Panc1 (cell line): ENCODE measurements at regions of chr9 and their contacts with region 1.

Region 1: DNA sequence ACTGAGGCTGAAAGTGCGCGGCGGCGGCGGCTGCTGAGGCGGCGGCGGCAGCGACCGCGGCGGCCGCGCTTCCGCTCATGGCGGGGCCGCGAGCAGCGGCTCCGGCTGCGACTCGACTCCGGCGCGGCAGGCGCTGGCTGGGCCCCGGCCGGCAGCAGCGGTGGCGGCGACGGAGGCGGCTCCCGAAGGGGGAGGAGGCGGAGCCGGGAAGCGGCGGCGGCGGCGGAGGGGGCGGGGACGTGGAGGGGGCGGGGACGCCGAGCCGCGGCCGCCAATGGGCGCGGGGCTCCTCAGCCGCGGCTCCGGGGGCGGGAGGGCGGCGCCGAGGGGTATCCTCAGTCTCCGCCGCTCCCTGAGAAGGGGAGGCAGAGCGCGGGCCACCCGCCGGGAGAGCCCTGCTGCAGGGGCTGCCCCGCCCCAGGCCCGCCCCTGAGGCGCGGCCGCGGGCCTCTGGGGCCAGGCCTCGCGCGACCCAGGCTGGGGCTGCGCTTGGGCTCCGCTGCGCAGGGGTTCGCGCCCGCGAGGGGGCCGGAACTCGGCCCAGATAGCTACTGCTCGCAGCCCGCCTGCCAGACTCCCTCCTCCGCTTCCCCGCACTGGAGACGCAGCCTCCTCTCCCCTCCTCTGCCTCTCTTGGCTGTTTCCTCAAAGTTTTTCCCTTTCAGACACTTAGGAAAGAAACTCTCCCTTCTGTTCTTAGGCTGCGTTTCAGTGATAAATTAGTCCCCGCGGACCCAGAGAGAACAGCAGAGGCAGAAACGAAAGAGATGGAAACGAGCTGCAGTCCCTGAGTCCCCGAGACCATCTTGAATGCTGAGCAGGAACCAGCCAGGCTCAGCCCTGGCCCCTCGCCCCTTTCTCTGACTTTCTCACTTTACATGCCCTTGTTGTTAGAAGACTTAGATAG is 85.0 kb upstream of the MELK start:
- DNase-seq: peak; percentile 47
- ATAC-seq: peak; percentile 96
- H3K4me3 ChIP-seq: peak overlapping the region; percentile 73 to 90
- H3K27ac ChIP-seq: peak overlapping the region; percentile 98
- H3K4me1 ChIP-seq: peaks cover 18% of the 10 kb centered on the region
- H3K27me3 ChIP-seq: no peaks in the 10 kb centered on the region
- CTCF ChIP-seq: no peak

Region 2: GRCh38 chr9:36415822-36416515 is 71.8 kb before region 1 on chr9:
- CTCF ChIA-PET with region 1: no interaction called
- POLR2A ChIA-PET with region 1: no interaction called
- in situ Hi-C with region 1: no loop called
- intact Hi-C with region 1: no loop called
- DNase-seq: no peak
- ATAC-seq: no peak
- H3K4me3 ChIP-seq: no peak overlapping the region
- H3K27ac ChIP-seq: no peak overlapping the region
- H3K4me1 ChIP-seq: peaks cover 24% of the 10 kb centered on the region
- H3K27me3 ChIP-seq: no peaks in the 10 kb centered on the region
- CTCF ChIP-seq: no peak

Region 3: DNA sequence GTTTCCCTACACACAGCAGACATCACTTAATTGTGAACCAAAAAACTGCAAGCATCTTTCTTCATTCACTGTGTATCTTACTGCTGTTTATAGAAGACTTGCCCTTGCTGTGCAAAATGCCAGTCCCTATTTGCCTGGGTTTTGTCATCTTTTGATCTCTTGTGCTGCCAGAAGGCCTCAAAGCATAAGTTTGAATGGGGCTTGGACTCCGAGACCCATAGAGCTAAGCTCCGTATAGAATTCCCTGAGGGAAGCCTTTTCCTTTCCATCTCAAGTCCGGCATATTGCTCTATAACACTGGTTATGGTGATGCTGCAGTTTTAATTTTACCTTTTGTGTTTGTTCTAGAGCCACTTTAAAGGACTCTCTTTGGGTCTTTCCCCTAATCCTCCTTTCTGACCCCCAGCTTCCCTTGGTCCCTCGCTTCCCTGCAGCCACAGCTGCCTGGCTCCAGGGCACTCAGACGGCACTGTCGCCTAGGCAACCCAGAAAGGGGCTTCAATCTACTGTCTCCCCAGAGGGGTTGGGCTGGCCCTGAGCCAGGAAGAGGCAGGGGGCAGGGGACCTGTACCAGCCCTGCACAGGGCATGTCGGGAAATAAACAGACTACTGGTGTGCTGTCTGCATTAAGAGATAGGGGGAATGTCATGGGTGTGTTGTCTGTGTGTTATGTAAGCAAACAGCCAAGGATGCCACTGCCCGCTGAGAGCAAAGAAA is 11.6 kb after region 1 on chr9:
- CTCF ChIA-PET with region 1: interaction called, 10 read pairs
- POLR2A ChIA-PET with region 1: interaction called, 12 read pairs
- in situ Hi-C with region 1: no loop called
- intact Hi-C with region 1: no loop called
- DNase-seq: no peak
- ATAC-seq: no peak
- H3K4me3 ChIP-seq: no peak overlapping the region
- H3K27ac ChIP-seq: no peak overlapping the region
- H3K4me1 ChIP-seq: no peaks in the 10 kb centered on the region
- H3K27me3 ChIP-seq: no peaks in the 10 kb centered on the region; the same call in 1 of the 2 replicates
- CTCF ChIP-seq: no peak

Region 4: DNA sequence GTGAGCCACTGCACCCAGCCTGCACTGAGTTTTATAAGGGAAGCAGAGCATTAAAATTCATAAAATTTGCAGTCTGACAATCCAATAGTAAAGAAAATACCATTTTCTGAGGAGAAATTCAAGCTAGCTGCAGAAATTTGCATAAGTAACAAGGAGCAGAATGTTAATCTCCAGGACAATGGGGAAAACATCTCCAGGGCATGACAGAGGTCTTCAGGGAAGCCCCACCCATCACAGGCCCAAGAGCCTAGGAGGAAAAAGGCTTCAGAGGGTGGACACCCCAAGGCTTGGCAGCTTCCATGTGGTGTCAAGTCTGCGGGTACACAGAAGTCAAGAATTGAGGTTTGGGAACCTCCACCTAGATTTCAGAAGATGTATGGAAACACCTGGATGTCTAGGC is 47.4 kb after region 1 on chr9:
- CTCF ChIA-PET with region 1: interaction called, 5 read pairs
- POLR2A ChIA-PET with region 1: interaction called, 13 read pairs
- in situ Hi-C with region 1: no loop called
- intact Hi-C with region 1: no loop called
- DNase-seq: no peak
- ATAC-seq: no peak
- H3K4me3 ChIP-seq: no peak overlapping the region
- H3K27ac ChIP-seq: no peak overlapping the region
- H3K4me1 ChIP-seq: no peaks in the 10 kb centered on the region
- H3K27me3 ChIP-seq: no peaks in the 10 kb centered on the region
- CTCF ChIP-seq: no peak

Region 5: DNA sequence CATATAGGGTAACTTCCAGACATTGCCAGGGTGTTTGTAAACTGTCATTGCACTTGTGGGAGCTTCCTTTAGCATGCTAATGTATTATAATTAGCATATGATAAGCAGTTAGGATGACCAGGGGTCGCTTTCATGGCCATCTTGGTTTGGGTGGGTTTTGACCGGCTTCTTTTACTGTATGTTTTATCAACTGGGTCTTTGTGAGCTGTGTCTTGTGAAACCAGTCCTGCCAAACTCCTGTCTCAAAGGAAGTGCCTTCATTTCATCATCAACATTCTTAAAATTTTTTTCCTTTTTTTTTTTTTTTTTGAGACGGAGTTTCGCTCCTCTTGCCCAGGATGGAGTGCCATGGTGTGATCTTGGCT is 73.1 kb after region 1 on chr9:
- CTCF ChIA-PET with region 1: no interaction called
- POLR2A ChIA-PET with region 1: no interaction called
- in situ Hi-C with region 1: no loop called
- intact Hi-C with region 1: loop called (anchors 5 kb)
- DNase-seq: no peak
- ATAC-seq: no peak
- H3K4me3 ChIP-seq: no peak overlapping the region
- H3K27ac ChIP-seq: no peak overlapping the region
- H3K4me1 ChIP-seq: no peaks in the 10 kb centered on the region
- H3K27me3 ChIP-seq: no peaks in the 10 kb centered on the region
- CTCF ChIP-seq: no peak